PC-3 (cell line): ENCODE measurements at regions of chr22 and their contacts with region 1.

Region 1: DNA sequence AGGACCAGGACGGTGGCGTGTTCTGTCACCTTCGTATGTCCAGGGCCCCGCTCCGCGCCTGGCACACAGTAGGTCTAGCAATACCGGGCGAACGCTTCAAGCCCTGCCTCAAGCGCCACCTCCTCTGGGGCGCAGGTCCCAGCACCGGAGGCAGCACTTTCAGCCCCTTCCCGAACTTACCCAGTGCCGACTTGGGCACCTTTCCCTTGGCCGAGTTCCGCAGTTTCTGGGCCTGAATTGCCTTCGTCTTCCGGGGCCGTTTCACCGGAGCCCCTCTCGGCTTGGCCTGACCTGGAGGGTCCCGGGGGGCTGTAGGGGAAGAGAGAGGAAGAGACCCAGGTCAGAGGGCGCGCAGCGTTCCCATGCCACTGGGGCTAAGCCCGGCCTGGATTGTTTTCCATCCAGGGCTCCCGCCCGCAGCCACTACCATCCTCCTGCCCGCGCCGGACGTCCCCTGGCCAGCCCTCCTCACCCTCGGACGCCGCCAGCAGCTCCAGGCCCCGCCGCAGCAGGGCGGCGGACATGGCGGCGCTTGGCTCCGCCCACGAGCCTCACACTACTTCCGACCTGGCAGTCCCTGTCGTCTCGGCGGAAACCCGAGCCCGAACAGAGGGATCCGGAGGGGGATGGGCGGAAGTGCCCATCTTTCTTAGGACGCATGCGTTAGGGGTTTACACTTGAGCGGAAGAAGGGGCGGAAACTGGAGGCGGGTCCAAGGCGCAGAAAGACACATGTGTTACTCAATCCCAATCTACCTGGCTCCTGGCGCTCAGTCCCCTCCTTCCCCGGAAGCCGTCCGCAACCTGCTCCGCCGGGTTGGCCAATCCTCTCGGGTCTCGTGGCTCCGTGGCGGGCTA is at the start of gene RPS19BP1:
- DNase-seq: peak; percentile 98
- ATAC-seq: peak; percentile 78
- H3K4me3 ChIP-seq: peak within 1 kb of the TSS; percentile 90
- H3K27ac ChIP-seq: peak within 1 kb of the TSS; percentile 42
- H3K4me1 ChIP-seq: peaks cover 24% of the 10 kb centered on the region
- H3K27me3 ChIP-seq: no peaks in the 10 kb centered on the region
- CTCF ChIP-seq: no peak
- total RNA-seq, gene RPS19BP1: 253 and 320 TPM in 2 replicates

Region 2: DNA sequence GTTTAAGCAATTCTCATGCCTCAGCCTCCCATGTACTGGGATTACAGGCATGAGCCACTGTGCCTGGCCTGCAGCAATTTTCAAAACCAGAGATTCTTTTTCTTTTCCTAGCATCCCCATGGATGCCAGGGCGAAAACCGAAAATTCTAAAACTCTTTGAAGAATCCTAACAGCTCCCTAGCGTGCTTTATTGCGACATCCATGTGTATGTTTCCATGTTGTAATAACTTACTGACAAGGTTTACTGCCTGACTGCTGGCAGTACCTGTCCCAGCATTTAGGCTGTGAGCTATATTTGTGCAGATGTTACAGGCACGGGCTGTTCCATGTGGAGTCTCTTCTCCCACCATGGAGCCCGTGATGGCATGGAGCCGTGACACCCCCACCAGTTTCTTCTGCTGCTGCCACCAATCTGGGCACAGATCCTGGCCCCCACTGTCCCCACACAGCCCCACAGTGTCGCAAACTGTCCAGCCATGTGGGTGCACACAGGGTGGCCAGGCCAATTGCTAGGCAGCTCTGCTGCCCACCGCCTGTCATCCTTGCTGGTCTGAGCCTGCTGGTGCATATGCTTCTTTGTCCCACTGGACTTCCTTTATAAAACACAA is 140.0 kb before region 1 on chr22:
- CTCF ChIA-PET with region 1: no interaction called
- POLR2A ChIA-PET with region 1: no interaction called
- intact Hi-C with region 1: no loop called
- DNase-seq: no peak
- ATAC-seq: no peak
- H3K4me3 ChIP-seq: no peak overlapping the region
- H3K27ac ChIP-seq: no peak overlapping the region
- H3K4me1 ChIP-seq: no peaks in the 10 kb centered on the region
- H3K27me3 ChIP-seq: no peaks in the 10 kb centered on the region
- CTCF ChIP-seq: no peak

Region 3: DNA sequence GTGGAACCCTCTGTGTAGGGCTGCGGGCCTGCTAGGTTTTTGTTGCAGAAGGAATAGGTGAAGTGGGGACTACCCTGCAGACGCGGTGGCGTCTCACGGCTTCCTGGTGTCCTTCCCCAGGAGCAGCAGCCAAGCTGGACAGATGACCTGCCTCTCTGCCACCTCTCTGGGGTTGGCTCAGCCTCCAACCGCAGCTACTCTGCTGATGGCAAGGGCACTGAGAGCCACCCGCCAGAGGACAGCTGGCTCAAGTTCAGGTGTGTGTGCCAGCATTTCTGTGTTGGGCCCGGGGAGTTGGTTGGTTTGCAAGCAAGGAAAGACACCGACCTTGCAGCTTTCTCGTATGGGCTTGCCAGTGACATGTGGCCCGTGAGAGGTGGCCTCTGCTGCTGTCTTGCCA is 117.6 kb before region 1 on chr22:
- CTCF ChIA-PET with region 1: no interaction called
- POLR2A ChIA-PET with region 1: interaction called, 11 read pairs
- intact Hi-C with region 1: no loop called
- DNase-seq: no peak
- ATAC-seq: no peak
- H3K4me3 ChIP-seq: no peak overlapping the region
- H3K27ac ChIP-seq: no peak overlapping the region
- H3K4me1 ChIP-seq: no peaks in the 10 kb centered on the region
- H3K27me3 ChIP-seq: no peaks in the 10 kb centered on the region
- CTCF ChIP-seq: no peak

Region 4: DNA sequence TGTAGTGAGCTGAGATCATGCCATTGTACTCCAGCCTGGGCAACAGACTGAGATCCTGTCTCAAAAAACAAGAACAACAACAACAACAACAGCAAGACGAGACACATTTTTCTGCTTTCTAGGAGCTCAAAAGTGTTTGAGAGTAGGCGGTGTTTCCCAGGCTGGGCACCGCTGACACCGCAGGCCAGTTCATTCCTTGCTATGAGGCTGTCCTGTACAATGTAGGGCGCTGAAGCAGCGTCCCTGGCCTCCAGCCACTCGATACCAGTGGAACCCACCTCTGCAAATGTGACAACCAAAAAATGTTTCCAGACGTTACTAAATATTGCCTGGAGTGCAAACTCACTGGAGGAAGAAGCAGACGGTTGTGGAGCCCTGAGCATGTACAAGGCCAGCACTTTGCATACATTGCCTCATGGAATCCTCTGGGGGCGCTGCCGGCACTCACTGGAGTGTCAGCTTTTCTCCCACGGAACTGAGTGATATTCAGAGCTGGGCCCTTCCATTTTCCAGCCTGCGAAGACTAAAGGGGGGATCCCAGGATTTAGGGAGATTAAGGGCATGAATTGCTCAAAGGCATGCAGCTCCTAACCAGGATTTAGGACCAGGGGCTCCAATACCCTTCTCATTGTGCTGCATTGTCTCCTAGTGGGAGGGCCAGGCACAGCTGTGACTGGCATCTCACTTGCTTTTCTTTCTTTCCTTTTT is 36.2 kb before region 1 on chr22:
- CTCF ChIA-PET with region 1: interaction called, 8 read pairs
- POLR2A ChIA-PET with region 1: no interaction called
- intact Hi-C with region 1: loop called (anchors 5 kb)
- DNase-seq: peak; percentile 51
- ATAC-seq: peak; percentile 87
- H3K4me3 ChIP-seq: no peak overlapping the region
- H3K27ac ChIP-seq: no peak overlapping the region
- H3K4me1 ChIP-seq: peaks cover 16% of the 10 kb centered on the region
- H3K27me3 ChIP-seq: no peaks in the 10 kb centered on the region
- CTCF ChIP-seq: peak; percentile 75

Region 5: GRCh38 chr22:39520054-39520891 is 12.2 kb before region 1 on chr22 and contains the start of gene ATF4:
- CTCF ChIA-PET with region 1: interaction called, 14 read pairs
- POLR2A ChIA-PET with region 1: interaction called, 6 read pairs
- intact Hi-C with region 1: no loop called
- DNase-seq: peak; percentile 95
- ATAC-seq: peak; percentile 75
- H3K4me3 ChIP-seq: peak within 1 kb of the TSS; percentile 99
- H3K27ac ChIP-seq: peak within 1 kb of the TSS; percentile 80
- H3K4me1 ChIP-seq: peaks cover 19% of the 10 kb centered on the region
- H3K27me3 ChIP-seq: no peaks in the 10 kb centered on the region
- CTCF ChIP-seq: no peak
- total RNA-seq, gene ATF4: 230 and 240 TPM in 2 replicates

Region 6: DNA sequence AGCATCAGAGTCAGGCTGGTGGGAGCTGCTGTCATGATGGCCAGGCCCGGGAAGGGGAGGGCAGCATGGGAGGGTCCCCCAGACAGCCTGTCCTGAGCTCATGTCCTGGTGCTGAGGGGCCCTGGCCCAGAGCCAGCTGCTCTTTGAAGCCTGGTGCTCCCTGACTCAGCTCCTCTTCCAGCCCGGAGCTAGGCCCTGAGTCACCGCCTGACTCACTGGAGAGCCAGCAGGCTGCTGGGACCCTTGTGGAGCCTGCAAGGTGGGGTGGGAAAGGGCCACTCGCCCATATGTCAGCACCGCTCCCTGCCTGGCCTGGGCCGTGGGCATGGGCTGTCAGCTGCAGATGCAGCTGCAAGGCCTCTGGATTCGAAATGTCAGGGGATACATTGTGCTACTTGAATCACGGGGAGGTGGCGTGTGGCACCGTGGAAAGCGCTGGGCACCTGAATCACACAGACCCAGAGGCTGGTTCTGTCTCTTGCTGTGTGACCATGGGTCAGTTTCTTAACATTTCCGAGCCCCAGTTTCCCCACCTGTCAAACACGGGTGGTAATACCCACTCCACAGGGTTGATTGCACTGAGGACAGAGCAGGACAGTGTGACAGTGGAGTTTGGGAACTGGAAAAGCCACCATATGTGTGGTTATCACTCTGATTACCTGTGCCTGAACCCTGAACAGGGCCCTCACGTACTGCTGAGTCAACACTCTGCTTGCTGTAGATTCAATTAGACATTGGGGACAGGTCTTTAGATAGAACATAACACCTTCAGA is 42.5 kb after region 1 on chr22:
- CTCF ChIA-PET with region 1: no interaction called
- POLR2A ChIA-PET with region 1: no interaction called
- intact Hi-C with region 1: no loop called
- DNase-seq: peak; percentile 86
- ATAC-seq: peak; percentile 97
- H3K4me3 ChIP-seq: no peak overlapping the region
- H3K27ac ChIP-seq: no peak overlapping the region
- H3K4me1 ChIP-seq: peaks cover 14% of the 10 kb centered on the region
- H3K27me3 ChIP-seq: no peaks in the 10 kb centered on the region
- CTCF ChIP-seq: no peak

Region 7: DNA sequence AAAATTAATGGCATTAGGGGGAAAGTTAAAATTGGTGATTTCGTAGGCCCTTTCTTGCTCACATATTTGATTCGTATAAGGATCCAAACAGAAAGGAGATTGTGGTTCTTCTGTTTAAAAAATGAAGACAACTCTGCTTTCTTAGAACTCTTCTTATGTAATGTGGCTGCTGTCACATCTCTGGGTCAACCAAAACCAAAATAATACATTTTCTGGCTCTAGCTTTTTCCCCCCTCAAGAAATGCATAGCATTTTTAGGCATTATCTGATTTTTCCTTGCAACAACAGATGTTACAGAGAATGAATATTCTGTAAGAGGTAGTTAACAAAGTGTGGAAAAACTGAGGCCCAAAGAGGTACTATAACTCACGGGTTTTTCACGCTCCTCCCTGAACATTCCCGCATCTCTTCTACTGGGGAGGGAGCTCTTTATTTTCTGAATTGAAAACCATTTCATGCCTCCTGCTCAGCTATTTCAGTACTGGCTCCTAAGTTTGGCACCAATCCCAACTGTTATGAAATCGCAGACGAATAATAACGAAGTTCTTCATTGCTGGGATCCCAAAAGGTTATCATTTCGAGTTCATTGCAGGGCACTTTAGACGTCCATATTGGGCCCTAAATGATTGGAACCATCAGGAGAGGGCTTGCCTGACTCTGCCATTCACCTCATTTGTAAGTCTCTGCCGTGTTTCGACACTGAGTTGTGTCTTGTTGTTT is 385.5 kb after region 1 on chr22:
- CTCF ChIA-PET with region 1: interaction called, 11 read pairs
- POLR2A ChIA-PET with region 1: no interaction called
- intact Hi-C with region 1: no loop called
- DNase-seq: no peak
- ATAC-seq: no peak
- H3K4me3 ChIP-seq: no peak overlapping the region
- H3K27ac ChIP-seq: no peak overlapping the region
- H3K4me1 ChIP-seq: no peaks in the 10 kb centered on the region
- H3K27me3 ChIP-seq: peaks cover 70% of the 10 kb centered on the region
- CTCF ChIP-seq: no peak

Region 8: DNA sequence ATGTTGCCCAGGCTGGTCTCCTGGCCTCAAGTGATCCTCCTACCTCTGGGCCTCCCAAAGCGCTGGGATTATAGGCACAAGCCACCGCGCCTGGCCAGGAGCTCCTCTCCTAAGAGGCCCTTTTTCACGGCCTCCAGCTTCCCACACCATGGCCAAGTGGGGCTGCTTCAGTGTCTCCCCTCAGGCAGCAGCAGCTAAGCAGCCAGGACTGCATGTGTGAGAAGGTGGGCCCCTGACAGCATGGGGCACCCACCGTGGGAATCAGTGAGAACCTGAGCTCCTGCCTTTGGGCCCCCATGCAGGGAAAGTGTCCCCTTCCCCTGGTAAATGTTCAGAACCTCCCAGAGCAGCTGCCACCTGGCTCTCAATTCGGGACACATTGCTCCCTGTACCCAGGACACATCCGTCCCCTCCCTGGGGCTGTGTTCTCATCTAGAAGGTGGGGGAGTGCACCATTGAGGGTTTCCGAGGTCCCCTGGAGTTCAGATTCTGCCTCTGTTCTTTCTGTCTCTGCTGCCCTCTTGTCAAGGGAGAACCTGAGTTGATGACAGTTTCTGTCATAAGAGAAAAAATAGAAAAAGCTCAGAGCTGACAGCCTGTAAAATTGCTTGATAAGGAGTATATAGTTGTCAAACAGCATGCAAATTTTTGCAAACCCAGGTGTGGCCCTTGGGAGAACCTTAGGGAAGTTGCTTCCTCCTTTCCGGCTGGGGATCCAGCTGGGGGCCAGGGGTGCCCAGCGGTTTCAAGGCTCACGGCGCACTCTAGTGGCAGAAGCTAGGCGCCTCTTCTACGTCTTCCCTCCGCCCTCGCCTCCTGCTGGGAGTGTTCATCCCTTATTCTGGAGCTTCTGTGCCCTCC is 492.0 kb after region 1 on chr22:
- CTCF ChIA-PET with region 1: interaction called, 6 read pairs
- POLR2A ChIA-PET with region 1: no interaction called
- intact Hi-C with region 1: loop called (anchors 5 kb)
- DNase-seq: peak; percentile 67
- ATAC-seq: peak; percentile 81
- H3K4me3 ChIP-seq: no peak overlapping the region
- H3K27ac ChIP-seq: no peak overlapping the region
- H3K4me1 ChIP-seq: no peaks in the 10 kb centered on the region
- H3K27me3 ChIP-seq: no peaks in the 10 kb centered on the region
- CTCF ChIP-seq: peak; percentile 83

Region 9: DNA sequence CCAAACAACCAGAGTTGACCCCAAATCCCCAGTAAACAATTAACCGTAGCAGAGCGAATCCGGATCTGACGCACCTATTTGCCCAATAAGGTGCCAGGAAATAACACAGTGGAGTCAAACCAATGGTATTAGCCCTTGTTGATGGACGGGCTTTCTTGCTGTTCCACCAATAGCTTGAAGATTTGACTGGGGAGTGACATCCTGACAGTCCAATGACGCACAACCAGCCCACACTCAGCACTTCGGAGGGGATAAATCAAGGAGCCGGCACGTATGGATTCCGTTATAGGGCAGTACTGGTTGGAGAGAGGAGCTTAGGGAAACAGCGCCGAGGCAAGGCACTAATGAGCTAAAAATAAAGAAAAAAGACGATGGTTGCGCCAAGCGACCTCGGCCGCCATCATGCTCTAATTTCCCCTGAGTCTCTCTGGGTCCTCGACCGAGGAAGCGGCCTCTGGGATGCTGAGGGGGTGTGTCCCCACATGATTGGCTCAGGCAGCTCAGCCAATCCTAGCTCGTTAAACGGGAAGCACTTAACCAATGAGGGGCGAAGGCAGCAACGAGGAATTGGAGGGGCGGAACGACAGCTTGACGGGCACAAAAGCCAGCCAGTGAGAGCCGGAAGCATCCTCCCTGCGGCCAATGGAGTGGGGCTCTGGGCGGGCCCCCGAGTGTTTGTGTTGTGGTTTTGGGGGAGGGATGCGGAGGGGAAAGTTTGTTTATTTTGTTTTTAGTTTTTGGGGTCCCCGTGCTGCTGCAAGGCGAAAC is 511.8 kb after region 1 on chr22:
- CTCF ChIA-PET with region 1: no interaction called
- POLR2A ChIA-PET with region 1: no interaction called
- intact Hi-C with region 1: loop called (anchors 5 kb)
- DNase-seq: peak; percentile 96
- ATAC-seq: peak; percentile 85
- H3K4me3 ChIP-seq: peak overlapping the region; percentile 72
- H3K27ac ChIP-seq: peak overlapping the region; percentile 61
- H3K4me1 ChIP-seq: peaks cover 24% of the 10 kb centered on the region
- H3K27me3 ChIP-seq: no peaks in the 10 kb centered on the region
- CTCF ChIP-seq: no peak